ENCODE measurements at regions of chr9 and their contacts with region 1.

Region 1: GRCh38 chr9:108272349-108272899 is 583.4 kb downstream of the ACTL7B start:
- DNase-seq: peak; percentile 59
- ATAC-seq: peak; percentile 71 to 88

Region 2: GRCh38 chr9:107465467-107466451 is 806.7 kb before region 1 on chr9:
- intact Hi-C with region 1: loop called in 1 of 2 experiments (anchors 5 kb)
- DNase-seq: peak; percentile 86
- ATAC-seq: peak; percentile 98 to 100

Region 3: GRCh38 chr9:107484117-107484723 is 788.2 kb before region 1 on chr9:
- intact Hi-C with region 1: loop called (anchors 1 to 10 kb)
- DNase-seq: no peak
- ATAC-seq: peak; percentile 35 to 56

Region 4: DNA sequence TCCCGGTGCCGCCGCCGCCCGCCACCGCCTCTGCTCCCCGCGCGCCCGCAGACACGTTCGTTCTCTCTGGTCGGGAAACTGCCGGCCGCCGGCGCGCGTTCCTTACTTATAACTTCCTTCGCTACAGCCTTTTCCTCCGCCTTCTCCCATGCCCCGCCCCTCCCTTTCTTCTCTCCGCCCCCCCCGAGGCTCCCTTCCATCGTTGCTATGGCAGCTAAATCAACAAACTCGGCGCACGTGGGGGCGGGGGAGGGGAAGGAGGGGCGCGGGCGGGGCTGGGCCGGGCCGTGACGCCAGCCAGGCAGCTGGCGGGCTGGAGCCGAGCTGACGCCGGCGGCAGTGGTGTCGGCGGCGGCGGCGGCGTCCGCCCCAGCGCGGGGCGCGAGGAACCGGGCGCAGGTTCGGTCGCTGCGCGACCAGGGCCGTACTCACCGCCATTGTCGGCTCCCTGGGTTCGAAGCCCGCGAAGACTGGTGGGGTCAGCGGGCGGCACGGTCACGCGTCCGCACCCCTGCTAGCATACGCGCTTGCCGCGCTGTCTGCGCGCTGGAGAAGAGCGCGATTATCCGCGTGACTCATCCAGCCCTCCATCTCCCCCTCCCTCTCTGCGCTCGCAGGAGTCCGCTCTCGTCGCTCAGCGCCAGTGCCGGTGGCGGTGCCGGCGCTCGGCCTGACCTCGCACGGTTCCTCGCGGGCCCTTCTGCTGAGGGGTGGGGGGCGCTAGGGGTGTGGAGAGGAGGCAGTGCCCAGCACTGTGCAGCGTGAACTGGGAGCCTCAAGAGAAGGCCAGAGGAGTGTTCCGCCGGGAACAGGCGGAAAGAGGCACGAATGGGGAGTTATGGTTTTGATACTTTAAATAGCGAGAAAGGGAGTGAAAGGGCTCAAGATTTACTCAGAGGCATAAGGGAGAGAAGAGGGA is 782.5 kb before region 1 on chr9 and contains the start of gene KLF4:
- intact Hi-C with region 1: loop called in 1 of 2 experiments (anchors 10 kb)
- DNase-seq: peak; percentile 93
- ATAC-seq: peak; percentile 83 to 88
- total RNA-seq, gene KLF4: 45.2 to 66.9 TPM